Right ventricle myocardium superior (tissue), 1 donor: ENCODE measurements at regions of chr2 and their contacts with region 1.

Region 1: GRCh38 chr2:27889774-27890145 is 427 bp downstream of the RBKS start:
- DNase-seq: no peak
- ATAC-seq: peak; percentile 2

Region 2: DNA sequence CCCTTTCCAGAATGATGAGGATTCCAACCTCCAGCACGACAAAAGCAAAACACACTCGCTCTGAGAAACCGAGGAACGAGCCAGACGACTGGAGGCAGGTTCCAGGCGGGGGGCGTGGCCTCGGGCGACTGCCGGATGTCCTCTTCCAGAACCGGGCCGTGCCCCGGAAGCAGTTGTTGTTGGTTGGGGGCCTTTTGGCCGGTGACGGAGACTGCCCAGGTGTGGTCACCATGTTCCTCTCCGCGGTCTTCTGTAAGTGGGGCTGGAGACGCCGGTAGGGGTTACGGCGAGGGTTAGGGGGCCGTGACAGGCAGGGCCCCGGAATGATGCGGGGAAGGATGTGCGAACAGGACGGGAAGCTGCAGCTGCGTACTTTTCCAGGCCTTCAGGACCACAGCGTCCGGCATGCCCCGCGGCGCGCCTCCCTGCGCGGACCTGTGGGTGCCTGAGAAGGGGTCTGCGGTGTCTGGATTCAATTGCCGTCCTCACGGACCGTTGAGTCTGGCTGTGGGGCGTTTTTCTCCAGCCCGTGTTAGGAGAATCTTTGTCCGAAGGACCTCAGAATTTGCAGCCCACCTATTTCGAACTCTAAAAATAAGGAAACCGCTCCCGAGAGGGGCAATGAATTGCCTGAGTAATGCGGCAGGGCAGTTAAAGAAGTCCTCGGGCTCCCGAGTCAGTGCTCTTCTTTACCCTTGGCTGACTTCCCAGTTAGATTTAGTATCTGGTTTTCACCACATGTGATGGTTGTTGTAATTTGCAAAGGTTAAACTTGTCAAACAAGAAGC is 118.0 kb before region 1 on chr2 and contains the start of gene MRPL33:
- intact Hi-C with region 1: loop called (anchors 10 kb)
- DNase-seq: peak; percentile 97
- ATAC-seq: peak; percentile 97
- total RNA-seq, gene MRPL33: 356 TPM